ENCODE measurements at regions of chr3 and their contacts with region 1.

Region 1: DNA sequence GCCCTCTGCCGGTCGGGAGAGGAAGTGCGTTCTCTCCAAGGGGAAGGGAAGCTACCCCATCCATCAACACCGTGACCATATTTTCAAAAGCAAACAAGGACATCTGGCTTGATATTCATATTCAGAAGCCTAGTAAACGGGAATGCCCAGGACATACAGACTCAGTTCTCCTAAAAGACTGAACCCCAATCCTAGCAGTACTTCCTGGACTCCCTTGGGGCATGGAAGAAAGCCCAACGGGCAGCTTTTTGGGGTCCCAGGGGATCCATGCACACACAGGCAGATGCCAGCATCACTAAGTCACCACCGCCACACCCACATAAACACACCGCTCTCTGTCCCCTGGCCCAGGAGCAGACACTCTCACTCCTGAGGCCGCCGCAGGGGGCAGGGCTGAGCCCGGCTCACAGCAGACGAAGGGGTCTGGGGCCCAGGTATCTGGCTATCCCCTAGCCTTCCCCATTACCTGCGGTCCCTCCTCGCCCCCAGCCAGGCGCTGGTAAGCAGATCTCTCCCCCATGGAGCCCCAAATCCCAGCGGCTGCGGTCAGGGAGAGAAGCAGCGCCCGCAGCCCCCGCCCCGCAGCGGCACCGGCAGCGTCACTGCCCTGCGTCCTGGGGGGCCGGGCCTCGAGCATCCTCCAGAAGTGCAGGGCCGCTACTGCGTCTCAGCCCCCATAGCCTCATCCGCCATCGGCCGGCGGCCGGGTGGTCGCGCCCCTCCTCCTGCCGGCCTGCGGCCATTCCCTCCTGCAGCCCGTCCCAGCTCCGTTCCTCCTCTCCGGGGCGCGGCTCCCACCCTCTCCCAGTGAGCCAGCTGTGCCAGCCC is 13.4 kb downstream of the TNK2 start:
- DNase-seq: no peak
- H3K4me3 ChIP-seq: peak overlapping the region; percentile 72
- H3K27me3 ChIP-seq: no peaks in the 10 kb centered on the region
- CTCF ChIP-seq: peak; percentile 91

Region 2: DNA sequence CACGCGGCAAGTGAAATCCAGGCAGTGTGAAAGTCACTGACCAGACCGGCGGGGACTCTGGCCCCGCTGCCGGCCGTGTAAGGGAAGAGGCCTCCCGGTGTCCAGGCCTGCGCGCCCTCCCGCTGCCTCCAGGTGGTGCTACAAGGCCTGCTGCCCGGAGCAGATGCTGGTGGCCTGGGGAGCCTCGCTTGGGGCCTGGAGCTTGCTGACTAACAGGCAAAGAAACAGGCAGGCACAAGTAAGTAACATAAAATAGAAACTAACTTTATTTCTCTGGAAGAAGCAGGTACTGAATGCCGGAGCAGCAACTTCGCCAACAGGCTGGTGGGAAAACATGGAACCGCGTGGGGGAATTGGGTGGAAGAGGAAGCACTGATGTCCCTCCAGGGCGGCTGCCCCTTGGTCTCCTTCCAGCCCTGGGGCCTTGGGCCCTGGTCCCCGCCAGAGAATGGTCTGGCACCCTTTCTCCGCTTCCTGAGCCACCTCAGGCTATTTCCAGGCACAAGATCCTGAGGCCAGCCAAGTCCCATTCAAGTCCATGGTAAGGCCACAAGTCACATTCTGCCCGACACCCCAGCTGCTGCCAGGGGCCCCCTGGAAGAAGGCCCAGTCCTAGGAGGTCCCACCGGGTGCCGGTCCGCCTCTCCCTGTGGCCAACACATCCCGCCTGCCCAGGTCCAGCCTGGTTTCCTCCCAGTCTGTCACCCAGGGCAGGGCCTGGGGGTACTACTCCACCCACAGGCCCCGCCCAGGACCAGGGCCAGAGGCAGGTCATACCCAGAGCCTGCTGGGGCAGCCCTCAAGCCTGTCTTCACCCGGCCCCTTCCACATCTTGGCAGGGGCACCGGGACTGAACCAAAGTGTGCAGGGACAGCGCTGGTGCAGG is 31.6 kb before region 1 on chr3:
- CTCF ChIA-PET with region 1: interaction called, 268 read pairs
- POLR2A ChIA-PET with region 1: no interaction called
- DNase-seq: no peak
- H3K4me3 ChIP-seq: no peak overlapping the region
- H3K27me3 ChIP-seq: no peaks in the 10 kb centered on the region
- CTCF ChIP-seq: peak; percentile 97

Region 3: DNA sequence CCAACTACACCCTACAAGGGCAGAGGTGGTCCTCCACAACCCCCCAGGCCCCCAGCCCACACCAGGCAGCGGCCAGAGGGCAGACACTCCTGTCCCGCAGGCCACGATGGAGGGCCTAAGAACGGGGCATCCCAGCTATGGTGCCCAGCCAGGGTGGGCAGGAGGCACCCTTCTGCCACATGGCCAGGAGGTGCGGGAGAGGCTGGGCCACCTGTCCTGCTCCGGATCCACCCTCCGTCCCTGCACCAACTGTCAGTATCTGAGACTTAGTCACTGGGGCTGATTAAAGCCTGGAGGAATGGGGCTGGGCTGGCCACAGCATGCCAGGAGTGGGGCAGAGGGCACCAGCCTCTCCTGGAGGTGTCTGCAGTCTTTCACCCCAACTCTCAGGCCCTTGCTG is 24.6 kb before region 1 on chr3:
- CTCF ChIA-PET with region 1: interaction called, 23 read pairs
- POLR2A ChIA-PET with region 1: no interaction called
- DNase-seq: no peak
- H3K4me3 ChIP-seq: no peak overlapping the region
- H3K27me3 ChIP-seq: no peaks in the 10 kb centered on the region
- CTCF ChIP-seq: no peak

Region 4: GRCh38 chr3:195909644-195910508 is 14.9 kb after region 1 on chr3:
- CTCF ChIA-PET with region 1: interaction called, 65 read pairs
- POLR2A ChIA-PET with region 1: interaction called, 3 read pairs
- DNase-seq: no peak
- H3K4me3 ChIP-seq: peak overlapping the region; percentile 59
- H3K27me3 ChIP-seq: no peaks in the 10 kb centered on the region
- CTCF ChIP-seq: no peak

Region 5: DNA sequence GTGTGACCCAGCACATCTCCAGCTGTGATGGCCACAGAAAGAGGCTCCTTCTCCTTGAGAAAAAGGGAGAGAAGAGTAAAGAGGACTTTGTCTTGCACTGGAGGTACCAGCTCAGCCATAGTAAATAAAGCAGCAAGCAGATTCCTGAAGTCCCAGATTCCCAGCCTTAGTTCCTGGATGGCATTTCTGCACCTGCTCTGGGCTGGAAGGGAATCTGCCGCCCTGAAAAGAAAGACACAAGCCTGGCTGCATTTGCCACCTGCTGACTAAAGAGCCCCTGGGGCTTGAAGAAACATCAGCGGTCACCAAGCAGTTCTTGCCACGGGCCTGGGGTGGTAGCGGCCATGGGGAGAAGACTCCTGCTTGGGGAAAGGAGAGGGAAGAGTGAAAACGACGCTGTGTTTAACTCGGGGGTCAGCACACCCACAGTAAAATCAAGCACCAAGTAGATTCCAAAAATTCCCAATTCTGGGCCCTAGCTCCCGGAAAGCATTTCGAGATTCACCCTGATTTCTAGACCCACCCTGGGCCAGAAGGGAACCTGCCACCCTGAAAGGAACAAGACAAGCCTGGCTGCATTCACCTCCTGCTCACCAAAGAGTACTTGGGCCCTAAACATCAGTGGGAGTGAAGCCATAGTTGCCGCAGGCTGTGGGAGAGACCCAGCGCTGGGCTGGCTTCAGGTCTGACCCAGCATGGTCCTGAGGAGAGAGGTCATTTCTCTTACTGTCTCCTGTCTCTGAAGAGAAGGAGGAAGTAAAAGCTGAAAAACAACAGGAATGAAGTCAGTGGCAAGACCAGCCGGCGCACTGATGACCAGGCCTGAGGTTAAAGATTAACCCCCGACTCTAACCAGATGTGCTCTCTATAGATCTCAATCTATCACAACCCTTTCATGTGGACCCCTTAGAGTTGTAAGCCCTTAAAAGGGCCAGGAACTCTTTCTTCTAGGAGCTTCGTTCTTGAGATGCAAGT is 37.7 kb after region 1 on chr3:
- CTCF ChIA-PET with region 1: no interaction called
- POLR2A ChIA-PET with region 1: interaction called, 12 read pairs
- DNase-seq: no peak
- H3K4me3 ChIP-seq: no peak overlapping the region
- H3K27me3 ChIP-seq: no peaks in the 10 kb centered on the region
- CTCF ChIP-seq: no peak

Region 6: GRCh38 chr3:196073188-196073838 is 178.3 kb after region 1 on chr3:
- CTCF ChIA-PET with region 1: no interaction called
- POLR2A ChIA-PET with region 1: no interaction called
- DNase-seq: no peak
- H3K4me3 ChIP-seq: no peak overlapping the region
- H3K27me3 ChIP-seq: no peaks in the 10 kb centered on the region
- CTCF ChIP-seq: peak; percentile 82

Region 7: GRCh38 chr3:196336319-196337145 is 441.5 kb after region 1 on chr3:
- CTCF ChIA-PET with region 1: no interaction called
- POLR2A ChIA-PET with region 1: no interaction called
- DNase-seq: no peak
- H3K4me3 ChIP-seq: no peak overlapping the region
- H3K27me3 ChIP-seq: no peaks in the 10 kb centered on the region
- CTCF ChIP-seq: no peak

Measured in BJ (cell line).